Activated CD4-positive, alpha-beta memory T cell treated with anti-CD3 and anti-CD28 coated beads for 36 hours (primary cell): ENCODE measurements at regions of chr2 and their contacts with region 1.

Region 1: GRCh38 chr2:238462782-238463396 is 36.2 kb downstream of the ASB1 start:
- DNase-seq: no peak
- H3K4me3 Mint-ChIP-seq: no peak overlapping the region
- H3K27ac Mint-ChIP-seq: no peak overlapping the region
- H3K4me1 Mint-ChIP-seq: no peaks in the 10 kb centered on the region
- H3K27me3 Mint-ChIP-seq: no peaks in the 10 kb centered on the region

Region 2: DNA sequence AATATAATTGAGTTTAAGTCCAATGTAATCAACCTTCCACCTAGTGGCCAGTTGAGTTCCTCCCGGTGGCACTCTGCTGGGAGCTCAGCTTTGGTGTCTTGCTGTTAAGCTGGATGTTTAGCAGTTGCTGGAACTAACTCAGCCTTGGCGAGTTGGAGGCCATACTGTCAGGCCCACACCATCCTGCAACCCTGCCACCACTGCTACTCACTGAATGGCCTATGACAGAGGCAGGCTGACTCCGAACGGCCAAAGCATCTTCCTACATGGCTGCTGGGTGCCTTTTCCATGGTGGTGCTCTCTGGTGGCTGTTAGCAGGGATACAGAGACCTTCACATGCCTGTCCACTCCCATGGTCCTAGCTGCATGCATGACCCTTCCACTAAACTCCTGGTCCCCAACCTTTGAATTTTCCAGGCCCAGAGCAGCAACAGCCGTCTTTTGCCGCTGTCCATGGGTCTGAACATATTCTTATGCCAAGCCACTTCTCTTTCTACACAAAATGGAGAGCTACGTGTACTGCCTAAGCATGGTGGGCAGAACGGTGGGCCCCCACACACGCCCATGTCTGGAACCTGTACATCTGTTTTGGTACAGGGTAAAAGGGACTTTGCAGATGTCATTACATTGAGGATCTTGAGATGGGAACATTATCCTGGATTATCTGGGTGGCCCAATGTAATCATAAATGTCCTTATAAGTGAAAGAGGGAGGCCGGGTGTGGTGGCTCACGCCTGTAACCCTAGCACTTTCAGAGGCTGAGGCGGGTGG is 157.6 kb before region 1 on chr2:
- CTCF ChIA-PET with region 1: no interaction called
- POLR2A ChIA-PET with region 1: no interaction called
- intact Hi-C with region 1: no loop called
- DNase-seq: no peak
- H3K4me3 Mint-ChIP-seq: no peak overlapping the region
- H3K27ac Mint-ChIP-seq: no peak overlapping the region
- H3K4me1 Mint-ChIP-seq: no peaks in the 10 kb centered on the region
- H3K27me3 Mint-ChIP-seq: peaks cover 2% of the 10 kb centered on the region

Region 3: DNA sequence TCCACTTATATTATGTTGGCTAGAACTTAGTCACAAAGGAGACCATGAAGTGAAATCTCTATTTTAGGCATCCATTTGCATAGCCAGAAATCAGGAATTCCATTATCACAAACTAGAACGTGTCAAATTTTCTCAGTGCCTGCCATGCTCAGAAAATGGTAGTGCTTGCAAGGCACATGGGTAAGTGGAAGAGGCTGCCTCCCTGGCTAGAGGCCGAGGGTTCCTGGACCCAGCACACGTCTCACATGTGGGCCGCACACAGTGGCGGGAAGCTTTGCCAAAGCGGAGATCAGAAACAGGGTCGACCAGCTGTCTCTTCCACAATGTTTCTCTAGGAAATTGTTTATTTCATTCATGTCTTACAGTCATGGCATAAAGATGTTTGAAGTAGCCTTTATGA is 100.3 kb before region 1 on chr2:
- CTCF ChIA-PET with region 1: interaction called, 15 read pairs
- POLR2A ChIA-PET with region 1: no interaction called
- intact Hi-C with region 1: loop called (anchors 1 kb)
- DNase-seq: no peak
- H3K4me3 Mint-ChIP-seq: no peak overlapping the region
- H3K27ac Mint-ChIP-seq: no peak overlapping the region
- H3K4me1 Mint-ChIP-seq: peaks cover 10% of the 10 kb centered on the region
- H3K27me3 Mint-ChIP-seq: no peaks in the 10 kb centered on the region

Region 4: DNA sequence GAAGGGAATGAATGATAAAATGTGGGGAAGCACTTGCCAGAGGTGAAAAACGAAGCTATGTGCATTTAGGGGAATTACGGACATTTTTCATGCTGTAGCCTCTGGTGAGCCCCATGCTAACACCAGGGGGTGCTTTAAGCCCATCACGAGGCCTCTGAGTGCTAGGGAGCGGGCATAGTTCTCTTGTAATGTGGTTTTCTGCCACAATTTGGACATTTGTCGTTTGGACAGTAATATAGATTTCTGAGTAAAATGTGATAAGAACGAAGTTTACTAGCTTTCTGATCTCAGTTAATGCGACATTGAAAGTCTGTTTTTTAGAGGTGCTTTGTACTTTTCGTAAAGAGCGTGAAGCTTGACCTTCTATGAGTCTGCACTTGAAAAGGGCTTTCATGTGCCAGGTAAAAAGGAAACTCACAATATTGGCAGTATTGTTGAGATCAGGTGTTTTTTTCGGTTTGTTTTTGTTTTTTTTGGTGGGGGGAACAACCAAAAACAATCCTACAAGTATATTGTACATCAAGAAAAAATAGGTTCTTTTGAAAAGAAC is 92.0 kb before region 1 on chr2:
- CTCF ChIA-PET with region 1: interaction called, 29 read pairs
- POLR2A ChIA-PET with region 1: interaction called, 3 read pairs
- intact Hi-C with region 1: loop called (anchors 1 kb)
- DNase-seq: peak; percentile 67
- H3K4me3 Mint-ChIP-seq: no peak overlapping the region
- H3K27ac Mint-ChIP-seq: no peak overlapping the region
- H3K4me1 Mint-ChIP-seq: peaks cover 2% of the 10 kb centered on the region
- H3K27me3 Mint-ChIP-seq: no peaks in the 10 kb centered on the region